Activated CD4-positive, alpha-beta memory T cell treated with anti-CD3 and anti-CD28 coated beads for 36 hours (primary cell): ENCODE measurements at regions of chr19 and their contacts with region 1.

Region 1: GRCh38 chr19:18419195-18419698 is at the start of gene SSBP4:
- DNase-seq: peak; percentile 79
- H3K4me3 Mint-ChIP-seq: peak within 1 kb of the TSS; percentile 96
- H3K27ac Mint-ChIP-seq: peak within 1 kb of the TSS; percentile 87
- H3K4me1 Mint-ChIP-seq: peaks cover 79% of the 10 kb centered on the region
- H3K27me3 Mint-ChIP-seq: peaks cover 17% of the 10 kb centered on the region
- total RNA-seq, gene SSBP4: 97.9 to 102 TPM

Region 2: DNA sequence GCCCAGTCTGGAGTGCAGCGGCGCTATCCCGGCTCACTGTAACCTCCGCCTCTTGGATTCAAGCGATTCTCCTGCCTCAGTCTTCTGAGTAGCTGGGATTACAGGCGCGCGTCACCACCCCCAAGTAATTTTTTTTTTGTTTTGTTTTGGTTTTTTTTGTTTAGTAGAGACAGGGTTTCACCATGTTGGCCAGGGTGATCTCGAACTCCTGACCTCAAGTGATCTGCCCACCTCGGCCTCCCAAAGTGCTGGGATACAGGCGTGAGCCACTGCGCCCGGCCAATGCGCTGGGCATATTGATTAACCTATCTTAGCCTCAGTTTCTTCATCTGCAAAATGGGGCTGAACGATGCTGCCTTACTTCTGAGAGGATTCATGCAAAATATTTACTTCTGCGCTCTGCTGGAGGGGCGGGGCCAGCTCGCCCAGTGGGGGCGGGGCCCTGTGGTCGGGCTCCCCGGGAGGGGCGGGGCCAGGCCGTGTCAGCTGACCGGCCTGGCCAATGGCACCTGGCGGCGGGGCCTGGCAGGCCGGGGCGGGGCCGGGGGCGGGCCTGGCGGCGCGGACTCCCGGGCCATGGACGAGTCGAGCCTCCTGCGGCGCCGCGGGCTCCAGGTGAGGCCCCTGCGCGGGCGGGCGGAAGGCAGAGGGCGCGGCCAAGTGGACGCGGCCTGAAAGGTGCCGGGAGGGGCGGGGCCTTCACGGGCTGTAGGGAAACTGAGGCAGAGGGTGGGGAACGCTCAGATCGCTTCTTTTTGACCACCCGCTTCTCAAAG is 321.8 kb before region 1 on chr19 and contains the start of gene MAST3:
- CTCF ChIA-PET with region 1: no interaction called
- POLR2A ChIA-PET with region 1: no interaction called
- intact Hi-C with region 1: loop called (anchors 10 kb)
- DNase-seq: peak; percentile 95
- H3K4me3 Mint-ChIP-seq: peak within 1 kb of the TSS; percentile 83
- H3K27ac Mint-ChIP-seq: peak within 1 kb of the TSS; percentile 58
- H3K4me1 Mint-ChIP-seq: peaks cover 24% of the 10 kb centered on the region
- H3K27me3 Mint-ChIP-seq: no peaks in the 10 kb centered on the region
- total RNA-seq, gene MAST3: 22.5 to 23.8 TPM

Region 3: GRCh38 chr19:18379803-18380747 is 39.2 kb before region 1 on chr19:
- CTCF ChIA-PET with region 1: interaction called, 5 read pairs
- POLR2A ChIA-PET with region 1: no interaction called
- intact Hi-C with region 1: loop called (anchors 5 kb)
- DNase-seq: no peak
- H3K4me3 Mint-ChIP-seq: no peak overlapping the region
- H3K27ac Mint-ChIP-seq: no peak overlapping the region
- H3K4me1 Mint-ChIP-seq: no peaks in the 10 kb centered on the region
- H3K27me3 Mint-ChIP-seq: peaks cover 7% of the 10 kb centered on the region

Region 4: DNA sequence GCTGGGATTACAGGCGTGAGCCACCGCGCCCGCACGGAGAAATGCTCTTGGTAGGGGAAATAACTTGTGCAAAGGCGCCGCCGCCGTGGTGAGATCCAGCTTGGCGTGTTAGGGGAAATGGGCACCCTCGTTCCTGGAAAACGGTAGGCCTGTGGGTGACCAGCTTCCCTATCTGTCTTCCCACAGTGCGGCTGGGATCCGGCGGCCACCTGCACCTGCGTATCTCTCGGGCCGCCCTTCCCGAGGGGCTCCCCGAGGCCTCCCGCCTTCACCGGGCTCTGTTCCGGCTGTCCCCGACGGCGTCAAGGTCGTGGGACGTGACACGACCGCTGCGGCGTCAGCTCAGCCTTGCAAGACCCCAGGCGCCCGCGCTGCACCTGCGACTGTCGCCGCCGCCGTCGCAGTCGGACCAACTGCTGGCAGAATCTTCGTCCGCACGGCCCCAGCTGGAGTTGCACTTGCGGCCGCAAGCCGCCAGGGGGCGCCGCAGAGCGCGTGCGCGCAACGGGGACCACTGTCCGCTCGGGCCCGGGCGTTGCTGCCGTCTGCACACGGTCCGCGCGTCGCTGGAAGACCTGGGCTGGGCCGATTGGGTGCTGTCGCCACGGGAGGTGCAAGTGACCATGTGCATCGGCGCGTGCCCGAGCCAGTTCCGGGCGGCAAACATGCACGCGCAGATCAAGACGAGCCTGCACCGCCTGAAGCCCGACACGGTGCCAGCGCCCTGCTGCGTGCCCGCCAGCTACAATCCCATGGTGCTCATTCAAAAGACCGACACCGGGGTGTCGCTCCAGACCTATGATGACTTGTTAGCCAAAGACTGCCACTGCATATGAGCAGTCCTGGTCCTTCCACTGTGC is 30.9 kb before region 1 on chr19:
- CTCF ChIA-PET with region 1: interaction called, 85 read pairs
- POLR2A ChIA-PET with region 1: interaction called, 3 read pairs
- intact Hi-C with region 1: no loop called
- DNase-seq: peak; percentile 88
- H3K4me3 Mint-ChIP-seq: peak overlapping the region; percentile 64
- H3K27ac Mint-ChIP-seq: no peak overlapping the region
- H3K4me1 Mint-ChIP-seq: peaks cover 4% of the 10 kb centered on the region
- H3K27me3 Mint-ChIP-seq: peaks cover 31% of the 10 kb centered on the region